ENCODE measurements at regions of chr19 and their contacts with region 1.

Region 1: GRCh38 chr19:19268453-19269385 is 4.4 kb downstream of the TM6SF2 start:
- DNase-seq: no peak
- H3K4me3 ChIP-seq: no peak overlapping the region
- H3K4me3 Mint-ChIP-seq: no peak overlapping the region
- H3K27ac Mint-ChIP-seq: no peak overlapping the region
- H3K4me1 ChIP-seq: no peaks in the 10 kb centered on the region; the same call in 1 of the 2 replicates
- H3K4me1 Mint-ChIP-seq: no peaks in the 10 kb centered on the region
- H3K27me3 ChIP-seq: no peaks in the 10 kb centered on the region
- H3K27me3 Mint-ChIP-seq: no peaks in the 10 kb centered on the region
- CTCF ChIP-seq: no peak

Region 2: DNA sequence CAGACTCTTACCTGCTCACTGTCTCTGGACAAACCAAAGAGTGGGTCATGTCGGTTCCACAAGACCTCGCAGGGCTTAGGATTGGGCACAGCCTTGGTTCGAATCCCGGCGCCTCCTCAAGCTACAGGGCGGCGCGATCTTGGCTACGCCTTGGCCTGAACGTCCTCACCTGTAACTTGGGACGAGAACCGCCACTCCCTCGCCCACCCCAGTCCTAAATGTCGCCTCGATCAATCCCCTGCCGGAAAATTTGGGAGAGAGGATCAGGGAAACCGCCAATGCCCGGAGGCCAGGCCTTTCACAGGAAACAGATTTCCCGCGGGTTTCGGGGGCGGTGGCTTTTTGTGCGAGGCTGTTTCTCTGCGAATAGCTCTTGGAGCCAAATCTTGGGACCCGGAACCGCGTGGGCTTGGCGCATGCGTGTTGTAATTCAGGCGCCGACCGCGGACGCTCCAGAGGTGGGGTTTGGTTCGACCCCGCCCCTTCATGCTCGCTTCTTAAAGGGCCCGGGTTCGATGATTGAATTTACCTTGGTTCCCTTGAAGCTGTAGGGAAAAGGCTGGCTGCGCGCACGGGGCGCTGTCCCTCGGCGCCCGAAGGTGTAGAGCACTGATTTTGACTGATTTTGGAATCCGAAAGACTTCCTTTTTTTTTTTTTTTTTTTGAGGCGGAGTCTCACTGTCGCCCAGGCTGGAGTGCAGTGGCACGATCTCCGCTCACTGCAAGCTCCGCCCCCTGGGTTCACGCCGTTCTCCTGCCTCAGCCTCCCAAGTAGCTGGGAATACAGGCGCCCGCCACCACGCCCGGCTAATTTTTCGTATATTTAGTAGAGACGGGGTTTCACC is 65.5 kb before region 1 on chr19 and contains the start of gene NR2C2AP:
- CTCF ChIA-PET with region 1: interaction called, 12 read pairs
- POLR2A ChIA-PET with region 1: no interaction called
- intact Hi-C with region 1: no loop called
- DNase-seq: peak; percentile 90 to 92
- H3K4me3 ChIP-seq: peak within 1 kb of the TSS; percentile 67
- H3K4me3 Mint-ChIP-seq: peak within 1 kb of the TSS; percentile 83
- H3K27ac Mint-ChIP-seq: peak within 1 kb of the TSS; percentile 87
- H3K4me1 ChIP-seq: peaks cover 4% of the 10 kb centered on the region; the same call in 1 of the 2 replicates
- H3K4me1 Mint-ChIP-seq: no peaks in the 10 kb centered on the region
- H3K27me3 ChIP-seq: no peaks in the 10 kb centered on the region
- H3K27me3 Mint-ChIP-seq: peaks cover 3% of the 10 kb centered on the region
- CTCF ChIP-seq: no peak
- total RNA-seq, gene NR2C2AP: 25.2 and 25.7 TPM in 2 replicates

Measured in Caco-2 (cell line).